Activated T-helper 1 cell treated with anti-CD3 and anti-CD28 coated beads, Interleukin-12 subunit alpha, Interleukin-12 subunit beta, Interleukin-2, Interleukin-4 antibody, amounts not matched to agents 30 ng/mL and 10 ng/mL and 1 ng/mL, durations not matched to agents 14 hours and 24 hours and 36 hours (primary cell): ENCODE measurements at regions of chr3 and their contacts with region 1.

Region 1: GRCh38 chr3:195909644-195910508 is 1.5 kb upstream of the TNK2 start:
- DNase-seq: peak; percentile 83
- H3K4me3 Mint-ChIP-seq: peak overlapping the region; percentile 72
- H3K27ac Mint-ChIP-seq: peak overlapping the region; percentile 55
- H3K4me1 Mint-ChIP-seq: peaks cover 37% of the 10 kb centered on the region
- H3K27me3 Mint-ChIP-seq: no peaks in the 10 kb centered on the region

Region 2: GRCh38 chr3:195271116-195271858 is 638.6 kb before region 1 on chr3 and contains the start of gene XXYLT1:
- intact Hi-C with region 1: loop called (anchors 2 kb)
- DNase-seq: peak; percentile 85
- H3K4me3 Mint-ChIP-seq: peak within 1 kb of the TSS; percentile 89
- H3K27ac Mint-ChIP-seq: peak within 1 kb of the TSS; percentile 91
- H3K4me1 Mint-ChIP-seq: peaks cover 30% of the 10 kb centered on the region
- H3K27me3 Mint-ChIP-seq: no peaks in the 10 kb centered on the region
- total RNA-seq, gene XXYLT1: 14.5 and 14.9 TPM in 2 replicates

Region 3: DNA sequence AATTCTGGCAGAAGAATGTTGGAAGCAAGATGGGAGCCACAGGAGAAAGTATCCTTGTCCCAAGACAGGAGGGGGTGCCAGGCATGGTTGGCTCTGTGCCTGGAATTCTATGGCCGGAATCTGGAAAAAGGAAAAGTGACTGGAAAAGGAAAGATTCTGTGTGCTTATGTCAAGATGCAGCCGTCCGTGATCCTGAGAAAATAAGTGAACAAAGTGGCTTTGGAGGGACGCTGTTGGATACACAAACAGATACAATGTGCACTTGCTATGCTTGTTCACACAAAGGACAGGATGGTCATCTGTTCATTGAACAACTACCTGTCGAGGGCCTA is 217.6 kb before region 1 on chr3:
- intact Hi-C with region 1: loop called (anchors 5 kb)
- DNase-seq: no peak
- H3K4me3 Mint-ChIP-seq: peak overlapping the region; percentile 56
- H3K27ac Mint-ChIP-seq: peak overlapping the region; percentile 94
- H3K4me1 Mint-ChIP-seq: peaks cover 37% of the 10 kb centered on the region
- H3K27me3 Mint-ChIP-seq: no peaks in the 10 kb centered on the region

Region 4: GRCh38 chr3:195863121-195864006 is 46.5 kb before region 1 on chr3:
- intact Hi-C with region 1: loop called (anchors 1 kb)
- DNase-seq: peak; percentile 47
- H3K4me3 Mint-ChIP-seq: no peak overlapping the region
- H3K27ac Mint-ChIP-seq: no peak overlapping the region
- H3K4me1 Mint-ChIP-seq: peaks cover 10% of the 10 kb centered on the region
- H3K27me3 Mint-ChIP-seq: no peaks in the 10 kb centered on the region

Region 5: DNA sequence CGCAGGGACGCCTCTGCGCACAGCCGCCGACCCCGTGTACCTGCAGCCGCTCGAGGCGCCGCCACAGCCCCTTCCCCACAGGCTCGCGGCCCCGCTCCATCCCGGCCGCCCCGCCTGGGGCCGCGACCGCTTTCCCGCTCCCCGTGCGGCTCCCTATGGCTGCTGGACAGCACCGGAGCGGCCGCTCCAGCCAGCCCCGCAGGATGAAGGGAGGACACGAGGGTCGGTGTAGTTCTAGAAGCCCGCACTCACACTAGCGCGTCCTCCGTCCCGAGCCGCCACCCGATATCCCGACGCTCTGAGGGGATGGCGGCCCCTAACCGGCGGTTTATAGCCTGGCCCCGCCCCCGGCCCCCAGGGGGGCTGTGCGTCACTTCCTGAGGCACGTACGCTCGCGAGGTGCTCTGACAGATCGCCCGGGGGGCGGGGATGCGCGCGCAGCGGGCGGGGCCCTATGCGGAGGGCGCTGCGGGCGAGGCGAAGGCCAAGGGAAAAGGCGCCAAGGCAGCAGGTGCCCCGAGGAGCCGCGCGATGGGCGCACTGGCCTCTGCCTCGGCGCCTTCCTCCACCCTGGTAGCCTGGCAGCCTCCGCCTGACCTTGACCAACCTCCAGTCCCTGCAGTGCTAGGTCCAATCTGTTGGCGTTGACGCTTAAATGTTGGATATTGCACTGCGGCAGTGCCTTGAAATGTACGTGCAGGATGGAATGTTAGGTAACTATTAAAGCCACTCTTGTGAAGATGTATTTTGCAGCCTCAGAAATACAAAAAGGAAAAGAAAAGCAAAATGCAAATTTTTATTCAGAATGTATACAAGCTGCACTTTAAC is 172.1 kb after region 1 on chr3 and contains the start of gene TFRC:
- intact Hi-C with region 1: loop called (anchors 5 kb)
- DNase-seq: peak; percentile 95
- H3K4me3 Mint-ChIP-seq: peak within 1 kb of the TSS; percentile 100
- H3K27ac Mint-ChIP-seq: peak within 1 kb of the TSS; percentile 98
- H3K4me1 Mint-ChIP-seq: peaks cover 38% of the 10 kb centered on the region
- H3K27me3 Mint-ChIP-seq: no peaks in the 10 kb centered on the region
- total RNA-seq, gene TFRC: 791 TPM in 2 replicates

Region 6: DNA sequence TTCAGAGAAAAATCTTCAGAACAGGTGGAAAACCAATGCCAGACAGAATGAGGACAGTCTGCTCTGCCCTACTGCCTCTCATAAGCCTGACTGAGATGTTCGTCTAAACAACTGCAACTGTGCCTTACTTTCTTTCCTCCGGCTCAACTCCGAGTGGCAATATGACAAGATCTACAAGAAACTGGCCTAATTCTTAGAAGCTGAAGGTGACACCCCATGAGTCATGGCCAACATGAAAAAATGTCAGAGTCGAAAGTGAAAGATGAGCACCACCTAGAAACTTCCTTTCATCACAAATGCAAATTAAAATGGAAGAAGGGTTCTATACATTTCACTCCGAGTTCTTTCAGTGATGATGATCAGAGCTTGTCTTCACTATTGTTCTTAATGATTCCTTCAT is 364.7 kb after region 1 on chr3:
- intact Hi-C with region 1: loop called (anchors 10 kb)
- DNase-seq: peak; percentile 78
- H3K4me3 Mint-ChIP-seq: peak overlapping the region; percentile 79
- H3K27ac Mint-ChIP-seq: peak overlapping the region; percentile 98
- H3K4me1 Mint-ChIP-seq: peaks cover 60% of the 10 kb centered on the region
- H3K27me3 Mint-ChIP-seq: no peaks in the 10 kb centered on the region